ENCODE measurements at regions of chr12 and their contacts with region 1.

Region 1: DNA sequence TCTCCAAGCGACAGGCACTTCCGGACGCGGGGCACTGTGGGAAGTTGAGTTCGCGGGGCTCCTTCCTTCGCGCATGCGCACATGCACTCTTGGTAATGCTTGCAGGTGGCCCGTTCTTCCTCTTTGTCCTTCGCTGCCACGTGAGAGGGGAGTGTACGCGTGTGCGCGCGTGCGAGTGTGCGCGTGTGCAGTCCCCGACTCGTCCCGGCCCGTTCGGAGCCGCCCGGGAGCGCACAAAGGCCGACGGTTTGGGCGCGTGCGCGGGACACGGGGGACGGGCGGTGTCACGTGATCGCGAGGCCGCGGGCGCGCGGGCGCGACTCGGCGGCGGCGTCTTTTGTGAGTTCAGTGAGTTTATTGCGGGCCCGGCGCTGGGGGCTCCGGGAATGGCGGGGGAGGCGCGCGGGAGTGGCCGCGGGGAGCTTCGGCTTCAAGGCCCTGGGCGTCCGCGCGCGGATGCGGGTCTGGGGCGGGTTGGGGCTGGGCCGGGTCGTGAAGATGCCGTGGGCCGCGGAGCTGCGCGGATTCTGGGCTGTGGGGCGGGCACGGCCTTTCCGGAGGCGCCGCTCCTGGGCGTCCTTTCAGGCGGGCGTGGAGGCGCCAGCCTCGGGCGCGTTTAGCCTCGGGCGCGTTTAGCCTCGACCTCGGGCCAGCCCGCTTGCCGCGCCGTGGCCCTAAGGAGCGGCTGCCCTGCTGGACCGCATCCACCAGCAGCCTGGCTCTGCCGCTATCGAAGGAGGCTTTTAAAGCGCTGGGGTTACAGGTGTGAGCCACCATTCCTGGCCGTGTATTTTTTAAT is at the start of gene ZNF84:
- DNase-seq: peak; percentile 98
- H3K4me3 ChIP-seq: peak within 1 kb of the TSS; percentile 87 to 89 (median 88)
- H3K27ac ChIP-seq: peak within 1 kb of the TSS; percentile 91 to 98 (median 96)
- H3K4me1 ChIP-seq: peaks cover 4 to 12% (median 11%) of the 10 kb centered on the region in 4 donors
- H3K27me3 ChIP-seq: no peaks in the 10 kb centered on the region
- CTCF ChIP-seq: no peak
- EP300 ChIP-seq: no peak
- POLR2A ChIP-seq: peak; percentile 27
- total RNA-seq, gene ZNF84: 19.5 to 21.2 (median 20.7) TPM

Region 2: GRCh38 chr12:132566516-132567131 is 470.8 kb before region 1 on chr12:
- intact Hi-C with region 1: no loop called
- DNase-seq: no peak
- H3K4me3 ChIP-seq: no peak overlapping the region
- H3K27ac ChIP-seq: no peak overlapping the region
- H3K4me1 ChIP-seq: peaks cover 0 to 5% (median 2%) of the 10 kb centered on the region in 4 donors
- H3K27me3 ChIP-seq: no peaks in the 10 kb centered on the region
- CTCF ChIP-seq: no peak
- EP300 ChIP-seq: no peak
- POLR2A ChIP-seq: no peak

Region 3: GRCh38 chr12:132986001-132986912 is 51.1 kb before region 1 on chr12 and contains the start of gene ZNF26:
- intact Hi-C with region 1: loop called (anchors 2 kb)
- DNase-seq: peak; percentile 96
- H3K4me3 ChIP-seq: peak within 1 kb of the TSS; percentile 73 to 96 (median 81)
- H3K27ac ChIP-seq: peak within 1 kb of the TSS; percentile 79 to 92 (median 86)
- H3K4me1 ChIP-seq: peaks cover 9 to 23% (median 19%) of the 10 kb centered on the region in 4 donors
- H3K27me3 ChIP-seq: no peaks in the 10 kb centered on the region
- CTCF ChIP-seq: no peak
- EP300 ChIP-seq: no peak
- POLR2A ChIP-seq: no peak
- total RNA-seq, gene ZNF26: 9.6 to 15.8 (median 10.9) TPM

Region 4: GRCh38 chr12:133010657-133011297 is 26.6 kb before region 1 on chr12:
- intact Hi-C with region 1: no loop called
- DNase-seq: no peak
- H3K4me3 ChIP-seq: no peak overlapping the region
- H3K27ac ChIP-seq: no peak overlapping the region
- H3K4me1 ChIP-seq: no peaks in the 10 kb centered on the region
- H3K27me3 ChIP-seq: no peaks in the 10 kb centered on the region
- CTCF ChIP-seq: no peak
- EP300 ChIP-seq: no peak
- POLR2A ChIP-seq: no peak

Region 5: GRCh38 chr12:133080368-133081158 is 43.2 kb after region 1 on chr12 and contains the start of gene ZNF140:
- intact Hi-C with region 1: loop called (anchors 5 kb)
- DNase-seq: peak; percentile 98
- H3K4me3 ChIP-seq: peak within 1 kb of the TSS; percentile 75 to 89 (median 82)
- H3K27ac ChIP-seq: peak within 1 kb of the TSS; percentile 96 to 99 (median 97)
- H3K4me1 ChIP-seq: peaks cover 11 to 19% (median 15%) of the 10 kb centered on the region in 4 donors
- H3K27me3 ChIP-seq: no peaks in the 10 kb centered on the region
- CTCF ChIP-seq: peak; percentile 11 to 40 (median 37)
- EP300 ChIP-seq: no peak
- POLR2A ChIP-seq: no peak
- total RNA-seq, gene ZNF140: 12.0 to 13.8 (median 13.1) TPM

Region 6: DNA sequence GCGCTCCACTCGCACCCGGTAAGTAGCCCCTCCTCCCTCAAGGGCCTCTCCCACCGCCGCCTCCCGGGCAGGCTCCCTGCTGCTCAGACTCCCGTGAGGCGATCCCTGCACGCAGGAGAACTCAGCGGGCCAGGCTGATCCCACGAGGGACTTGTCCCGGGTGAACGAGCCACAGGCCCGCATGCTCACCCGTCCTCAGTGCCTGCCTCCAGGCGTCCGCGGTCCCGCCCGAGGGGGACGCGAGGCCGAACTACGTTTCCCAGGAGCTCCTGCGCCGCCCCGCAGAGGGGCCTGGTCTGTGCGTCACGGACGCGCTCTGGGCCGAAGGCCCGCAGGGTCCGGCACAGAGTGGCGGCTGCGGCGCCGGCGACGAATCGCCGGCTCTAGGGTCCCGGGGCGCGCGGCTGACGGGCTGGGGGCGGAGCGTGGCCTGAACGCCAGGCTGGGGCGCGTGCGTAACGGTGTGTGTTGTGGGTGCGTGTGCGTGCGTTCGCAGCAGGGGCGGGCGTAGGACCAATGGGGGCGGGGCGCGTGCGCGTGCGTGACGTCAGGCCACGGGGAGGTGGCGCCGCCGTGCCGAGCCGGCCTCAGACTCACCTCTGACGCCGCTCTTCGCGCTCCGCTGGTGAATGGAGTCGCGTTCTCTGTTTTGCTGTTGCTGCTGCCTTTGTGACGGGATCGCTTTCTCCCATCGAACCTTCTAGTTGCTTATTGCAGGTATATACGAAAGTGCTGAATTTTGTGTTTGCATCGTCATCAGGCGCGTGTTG is 92.8 kb after region 1 on chr12 and contains the starts of genes ZNF10 and ZNF891:
- intact Hi-C with region 1: loop called (anchors 2 kb)
- DNase-seq: peak; percentile 99
- H3K4me3 ChIP-seq: peak within 1 kb of the TSS; percentile 78 to 92 (median 80)
- H3K27ac ChIP-seq: peak within 1 kb of the TSS; percentile 94 to 99 (median 96)
- H3K4me1 ChIP-seq: peaks cover 7 to 14% (median 10%) of the 10 kb centered on the region in 4 donors
- H3K27me3 ChIP-seq: no peaks in the 10 kb centered on the region
- CTCF ChIP-seq: no peak
- EP300 ChIP-seq: peak; percentile 94
- POLR2A ChIP-seq: peak; percentile 16
- total RNA-seq, gene ZNF10: 3.4 to 15.4 (median 9.7) TPM
- total RNA-seq, gene ZNF891: 1.8 to 4.6 (median 2.6) TPM

Measured in esophagus muscularis mucosa (tissue), 4 donors.